ENCODE measurements at regions of chr2 and their contacts with region 1.

Region 1: DNA sequence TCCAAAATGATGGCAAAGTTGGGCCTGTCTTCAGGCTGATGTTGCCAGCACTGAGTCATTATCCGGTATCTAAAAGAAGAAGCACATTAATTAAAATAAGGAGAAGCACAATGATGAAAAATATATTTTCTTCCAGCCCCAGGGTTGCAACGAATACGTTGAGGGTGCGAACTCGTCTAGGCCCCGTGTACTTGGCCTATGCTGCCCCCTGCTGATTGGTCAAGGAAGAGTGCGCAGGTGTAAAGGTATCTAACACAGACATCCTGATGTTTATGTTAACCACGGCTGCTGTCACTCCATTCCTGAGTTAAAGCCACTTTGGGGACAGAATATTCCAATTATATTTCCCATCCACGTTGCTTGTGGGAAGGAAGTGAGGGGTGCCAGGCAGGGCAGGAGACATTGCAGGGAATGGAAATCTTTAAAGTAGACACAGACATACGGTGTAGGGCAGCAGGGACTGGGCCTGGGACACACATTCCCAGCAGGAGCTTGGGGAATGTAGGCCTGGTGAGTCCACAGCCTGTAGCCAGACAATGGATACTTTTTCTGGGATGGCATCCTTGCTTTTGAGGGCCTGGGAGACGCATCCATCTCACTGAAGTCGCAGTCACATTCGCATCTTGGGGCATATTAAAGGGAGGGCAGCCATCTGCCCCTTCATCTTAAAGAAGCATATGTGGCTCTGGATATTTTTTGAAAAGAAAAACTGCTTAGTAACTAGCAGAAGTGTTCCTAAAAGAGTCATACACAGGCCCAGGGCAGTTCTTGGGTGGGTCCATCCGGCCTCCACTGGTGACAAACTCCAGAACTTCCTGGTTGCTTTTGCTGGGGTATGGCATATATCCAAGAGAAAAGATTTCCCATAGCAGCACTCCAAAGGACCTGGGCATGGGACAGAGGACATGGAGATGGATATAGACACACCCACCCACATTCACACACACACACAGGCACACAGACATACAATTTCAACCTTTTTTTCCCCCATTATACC is 81.9 kb downstream of the CLIP4 start:
- DNase-seq: peak; percentile 47 to 89
- H3K4me3 ChIP-seq: no peak overlapping the region
- H3K4me1 ChIP-seq: peaks cover 3% of the 10 kb centered on the region
- H3K27me3 ChIP-seq: no peaks in the 10 kb centered on the region

Region 2: GRCh38 chr2:28810384-28811285 is 386.5 kb before region 1 on chr2 and contains the start of gene SPDYA:
- in situ Hi-C with region 1: no loop called
- DNase-seq: peak in 1 of 2 experiments; percentile 1
- H3K4me3 ChIP-seq: no peak within 1 kb of the TSS
- H3K4me1 ChIP-seq: no peaks in the 10 kb centered on the region
- H3K27me3 ChIP-seq: no peaks in the 10 kb centered on the region

Region 3: GRCh38 chr2:28821295-28821958 is 375.7 kb before region 1 on chr2:
- in situ Hi-C with region 1: loop called (anchors 10 kb)
- DNase-seq: peak; percentile 57 to 83
- H3K4me3 ChIP-seq: no peak overlapping the region
- H3K4me1 ChIP-seq: no peaks in the 10 kb centered on the region
- H3K27me3 ChIP-seq: no peaks in the 10 kb centered on the region

Region 4: GRCh38 chr2:29723255-29724001 is 526.3 kb after region 1 on chr2:
- in situ Hi-C with region 1: no loop called
- DNase-seq: no peak
- H3K4me3 ChIP-seq: no peak overlapping the region
- H3K4me1 ChIP-seq: peaks cover 4% of the 10 kb centered on the region
- H3K27me3 ChIP-seq: 0 out of 2 replicates have a peak, but pooled peaks cover 3% of the 10 kb centered on the region